Aorta (tissue), 5 donors: ENCODE measurements at regions of chr10 and their contacts with region 1.

Region 1: GRCh38 chr10:132452631-132453469 is 55.9 kb downstream of the PWWP2B start:
- DNase-seq: peak; percentile 90 to 95
- ATAC-seq: peak; percentile 90
- H3K4me3 ChIP-seq: no peak overlapping the region
- H3K27ac ChIP-seq: no peak overlapping the region
- H3K4me1 ChIP-seq: no peaks in the 10 kb centered on the region
- H3K27me3 ChIP-seq: no peaks in the 10 kb centered on the region

Region 2: DNA sequence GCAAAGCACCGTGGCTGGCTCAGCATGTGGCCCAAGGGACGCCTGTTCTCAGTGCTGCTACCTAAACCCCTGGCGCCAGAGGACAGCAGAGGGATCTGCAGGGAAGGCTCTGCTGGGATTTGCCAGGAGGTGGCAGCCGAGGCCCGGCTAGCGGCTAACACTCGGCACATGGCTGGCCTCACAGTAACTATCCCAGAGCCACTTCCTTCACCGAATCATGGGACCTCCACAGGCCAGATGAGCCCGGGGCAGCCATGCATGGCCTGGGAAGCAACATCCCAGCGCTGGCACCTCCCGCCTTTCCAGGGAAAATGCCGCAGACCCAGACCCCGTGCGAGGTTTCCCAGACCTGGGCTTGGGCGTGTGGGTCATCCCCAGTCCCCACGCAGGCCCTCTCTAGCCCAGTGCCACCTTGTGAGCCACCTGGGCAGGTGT is 229.7 kb before region 1 on chr10:
- intact Hi-C with region 1: loop called (anchors 2 to 5 kb)
- DNase-seq: peak; percentile 89 to 91
- ATAC-seq: peak; percentile 80
- H3K4me3 ChIP-seq: no peak overlapping the region
- H3K27ac ChIP-seq: no peak overlapping the region
- H3K4me1 ChIP-seq: no peaks in the 10 kb centered on the region
- H3K27me3 ChIP-seq: no peaks in the 10 kb centered on the region

Region 3: GRCh38 chr10:132387764-132388210 is 65.1 kb before region 1 on chr10:
- intact Hi-C with region 1: loop called in 1 of 2 experiments (anchors 2 kb)
- DNase-seq: peak; percentile 79 to 91
- ATAC-seq: no peak
- H3K4me3 ChIP-seq: no peak overlapping the region
- H3K27ac ChIP-seq: no peak overlapping the region
- H3K4me1 ChIP-seq: no peaks in the 10 kb centered on the region
- H3K27me3 ChIP-seq: no peaks in the 10 kb centered on the region

Region 4: GRCh38 chr10:132396495-132397035 is 56.3 kb before region 1 on chr10:
- intact Hi-C with region 1: loop called in 1 of 2 experiments (anchors 2 kb)
- DNase-seq: peak; percentile 75 to 90
- ATAC-seq: peak; percentile 34
- H3K4me3 ChIP-seq: peak overlapping the region; percentile 59 to 76
- H3K27ac ChIP-seq: peak overlapping the region in 1 of 2 donors; percentile 28
- H3K4me1 ChIP-seq: no peaks in the 10 kb centered on the region
- H3K27me3 ChIP-seq: no peaks in the 10 kb centered on the region

Region 5: GRCh38 chr10:132677473-132678227 is 224.8 kb after region 1 on chr10:
- intact Hi-C with region 1: no loop called
- DNase-seq: peak; percentile 35 to 43
- ATAC-seq: no peak
- H3K4me3 ChIP-seq: no peak overlapping the region
- H3K27ac ChIP-seq: no peak overlapping the region
- H3K4me1 ChIP-seq: no peaks in the 10 kb centered on the region
- H3K27me3 ChIP-seq: no peaks in the 10 kb centered on the region